ENCODE measurements at regions of chr13 and their contacts with region 1.

Region 1: GRCh38 chr13:70098669-70099068 is 9.0 kb upstream of the ATXN8OS start:
- ATAC-seq: peak in 1 of 8 experiments; percentile 44
- H3K4me3 ChIP-seq: no peak overlapping the region
- H3K27ac ChIP-seq: no peak overlapping the region
- H3K4me1 ChIP-seq: no peaks in the 10 kb centered on the region

Region 2: GRCh38 chr13:69751259-69751658 is 347.4 kb before region 1 on chr13:
- in situ Hi-C with region 1: no loop called
- ATAC-seq: no peak
- H3K4me3 ChIP-seq: no peak overlapping the region
- H3K27ac ChIP-seq: no peak overlapping the region
- H3K4me1 ChIP-seq: no peaks in the 10 kb centered on the region

Region 3: DNA sequence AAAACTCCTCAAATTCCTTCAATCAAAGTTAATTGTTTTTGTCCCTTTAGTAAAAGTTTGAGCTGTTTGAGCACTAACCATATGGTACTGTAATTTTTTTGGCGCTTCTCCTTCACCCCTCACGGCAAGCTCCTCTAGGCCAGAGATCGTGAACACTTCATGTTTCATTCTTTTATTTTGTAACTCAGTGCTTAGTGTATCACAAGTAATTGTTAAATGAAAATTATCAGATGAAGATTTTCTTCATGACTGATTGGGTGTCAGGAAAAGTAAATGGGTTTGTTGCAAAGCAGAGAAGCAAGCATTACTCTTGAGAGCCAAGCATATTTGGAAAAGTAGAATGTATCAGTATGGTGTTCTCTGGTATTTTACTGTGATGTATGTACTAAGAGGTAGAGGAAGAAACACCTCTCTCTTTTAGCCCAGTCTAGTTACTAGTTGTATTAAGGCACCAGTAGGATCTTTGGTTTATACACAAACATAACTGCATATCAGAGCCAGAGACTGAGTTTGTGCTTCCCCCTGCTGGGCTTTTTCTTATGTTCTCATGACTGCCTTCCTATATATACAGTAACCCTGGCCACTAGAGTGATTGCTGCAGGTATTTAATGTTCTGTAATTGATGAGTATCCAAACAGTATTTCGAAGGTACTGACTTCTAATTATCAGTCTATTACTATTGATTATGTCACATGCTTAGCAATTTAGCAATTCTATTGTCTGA is 211.9 kb after region 1 on chr13:
- in situ Hi-C with region 1: loop called in 1 of 9 experiments (anchors 25 kb)
- ATAC-seq: peak in 6 of 8 experiments; percentile 62 to 98 (median 82)
- H3K4me3 ChIP-seq: no peak overlapping the region
- H3K27ac ChIP-seq: no peak overlapping the region
- H3K4me1 ChIP-seq: no peaks in the 10 kb centered on the region